ENCODE measurements at regions of chr2 and their contacts with region 1.

Region 1: DNA sequence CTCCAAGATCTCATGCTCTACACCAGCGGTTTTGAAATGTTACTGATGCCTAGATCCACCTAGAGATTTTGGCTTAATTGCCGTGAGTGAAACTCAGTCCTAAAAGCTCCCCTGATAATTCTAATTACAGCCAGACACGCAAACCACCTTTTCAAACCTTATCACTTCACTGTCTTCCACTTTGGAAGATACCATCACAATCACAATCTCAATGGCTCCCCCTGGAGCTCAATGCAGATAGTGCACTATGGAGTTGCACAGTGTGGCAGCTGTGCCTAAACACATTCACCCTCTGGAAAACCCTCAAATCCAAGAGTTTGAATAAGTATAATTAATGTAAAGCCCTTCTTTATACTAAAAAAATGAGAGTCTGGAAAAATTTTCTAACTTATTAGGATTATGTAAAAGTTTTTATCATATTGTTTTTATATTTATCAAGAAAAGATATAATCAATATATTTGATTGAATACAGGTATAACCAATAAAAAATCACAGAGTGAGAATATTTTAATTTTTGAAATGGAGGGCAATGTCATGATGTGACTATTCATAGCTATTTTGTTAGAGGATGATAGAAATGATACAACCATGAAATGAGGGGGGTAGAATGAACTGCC is 102.9 kb upstream of the SLC8A1 start:
- DNase-seq: peak; percentile 13 to 43
- ATAC-seq: peak; percentile 66 to 68
- H3K4me3 ChIP-seq: no peak overlapping the region
- H3K27ac ChIP-seq: no peak overlapping the region
- H3K4me1 ChIP-seq: no peaks in the 10 kb centered on the region
- H3K27me3 ChIP-seq: no peaks in the 10 kb centered on the region
- CTCF ChIP-seq: peak; percentile 72 to 84 (median 77)
- POLR2A ChIP-seq: no peak

Region 2: DNA sequence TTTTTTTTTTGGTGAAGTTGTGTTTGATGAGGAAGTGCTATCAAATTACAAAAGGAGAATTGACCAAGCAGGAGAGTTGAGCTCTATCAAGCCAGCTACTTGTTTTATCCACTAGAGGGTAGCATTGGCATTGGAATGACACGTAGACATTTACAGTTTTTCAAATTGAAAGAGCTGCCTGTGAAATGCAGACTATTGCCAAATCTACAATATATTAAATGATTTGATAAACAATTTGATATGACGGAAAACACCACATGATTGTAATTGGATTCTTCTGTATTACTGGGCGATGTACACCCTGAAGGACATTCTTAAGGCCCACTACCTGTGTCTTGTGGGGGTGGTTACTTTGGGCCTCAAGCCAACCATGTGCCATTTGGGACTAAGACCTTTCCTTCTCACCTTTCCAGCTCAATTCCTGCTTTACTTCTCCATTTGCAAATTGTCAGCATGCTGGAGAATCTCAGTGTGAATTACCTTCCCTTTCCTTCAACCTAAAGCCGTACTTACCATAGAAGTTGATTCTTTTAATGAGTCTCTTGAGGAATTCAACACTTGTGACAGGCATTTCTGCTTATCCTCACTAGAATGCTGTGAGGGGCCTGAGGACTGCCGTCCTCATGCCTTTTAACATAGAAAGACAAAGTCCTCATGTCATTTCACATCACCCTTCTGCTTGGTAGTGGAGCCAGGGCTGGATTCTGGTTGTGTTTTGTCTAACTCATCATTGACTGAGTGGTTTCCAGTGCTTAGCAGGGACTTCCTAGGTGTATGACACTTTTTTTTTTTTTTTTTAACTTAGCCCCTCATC is 640.9 kb before region 1 on chr2:
- in situ Hi-C with region 1: loop called in 3 of 4 experiments (anchors 5 to 25 kb)
- intact Hi-C with region 1: loop called (anchors 1 kb)
- DNase-seq: no peak
- ATAC-seq: peak; percentile 58 to 75
- H3K4me3 ChIP-seq: no peak overlapping the region
- H3K27ac ChIP-seq: no peak overlapping the region
- H3K4me1 ChIP-seq: no peaks in the 10 kb centered on the region
- H3K27me3 ChIP-seq: no peaks in the 10 kb centered on the region
- CTCF ChIP-seq: peak; percentile 39 to 77 (median 59)
- POLR2A ChIP-seq: no peak

Region 3: DNA sequence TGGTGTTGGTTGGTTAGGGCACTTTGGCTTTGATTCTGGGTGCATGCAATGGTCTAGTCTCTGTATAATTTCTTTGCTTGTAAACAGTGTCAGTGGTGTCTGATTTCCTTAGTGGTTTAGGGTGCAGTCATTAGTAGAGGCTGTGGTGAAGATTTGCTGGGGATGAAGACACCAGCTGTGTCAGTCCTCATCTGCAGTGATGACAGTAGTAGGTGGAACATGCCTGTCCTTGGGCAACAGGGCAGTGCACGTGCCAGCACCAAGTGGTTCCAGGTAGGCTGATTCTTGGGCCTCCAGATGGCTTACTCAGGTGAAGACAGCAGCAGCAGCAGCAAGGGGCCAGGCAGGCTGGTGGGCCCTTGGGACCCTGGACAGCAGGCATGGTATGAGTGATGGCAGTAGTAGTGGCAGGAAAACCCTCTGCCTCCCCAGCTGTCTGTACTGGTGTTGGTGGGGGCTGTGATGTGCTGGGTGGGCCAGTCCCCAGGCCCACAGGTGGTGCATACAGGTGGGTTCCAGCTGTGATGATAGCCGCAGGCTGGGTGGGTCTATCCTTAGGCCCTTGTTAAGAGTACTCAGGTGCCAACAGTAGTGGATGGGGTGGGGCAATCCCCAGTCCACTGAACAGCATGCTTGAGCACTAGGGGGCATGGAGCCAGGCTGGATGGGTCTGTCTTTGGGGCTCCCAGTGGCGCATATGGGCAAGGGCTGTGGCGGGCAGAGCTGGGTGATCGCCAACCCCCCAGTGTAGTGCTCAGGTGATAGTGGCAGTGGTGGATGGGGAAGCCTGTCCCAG is 635.1 kb before region 1 on chr2:
- in situ Hi-C with region 1: loop called in 3 of 4 experiments (anchors 10 to 25 kb)
- intact Hi-C with region 1: no loop called
- DNase-seq: no peak
- ATAC-seq: no peak
- H3K4me3 ChIP-seq: no peak overlapping the region
- H3K27ac ChIP-seq: no peak overlapping the region
- H3K4me1 ChIP-seq: no peaks in the 10 kb centered on the region
- H3K27me3 ChIP-seq: no peaks in the 10 kb centered on the region
- CTCF ChIP-seq: no peak
- POLR2A ChIP-seq: no peak

Region 4: DNA sequence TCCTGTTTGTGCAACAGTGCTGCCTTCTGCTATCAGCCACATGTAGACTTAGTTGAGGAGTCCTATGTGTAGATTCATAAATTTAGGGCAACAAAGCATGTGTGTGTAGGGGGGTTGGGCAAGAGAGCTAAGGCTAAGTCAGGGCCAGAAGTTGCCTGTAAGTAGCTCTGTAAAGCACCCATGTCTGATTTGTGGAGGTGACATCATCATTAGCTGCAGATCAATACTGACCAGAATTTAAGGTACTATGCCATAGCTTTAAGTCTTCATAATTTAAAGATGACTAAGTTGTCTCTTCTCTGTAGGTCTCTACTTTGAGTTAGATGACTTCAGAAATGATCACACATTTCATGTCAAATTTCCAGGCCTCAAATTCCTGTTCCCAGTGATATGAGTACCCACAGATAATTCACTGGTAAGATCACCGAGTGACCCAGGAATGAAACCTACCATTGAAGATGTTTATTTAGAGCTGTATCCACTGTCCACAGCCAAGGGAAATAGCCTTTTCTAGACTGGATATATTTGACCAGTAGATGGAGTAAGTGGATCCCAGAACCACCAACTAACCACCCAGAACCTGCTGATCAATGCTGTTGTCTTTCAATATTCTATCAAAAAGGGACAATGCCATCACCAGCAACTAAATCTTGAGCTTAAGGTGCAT is 341.8 kb before region 1 on chr2:
- in situ Hi-C with region 1: loop called in 2 of 4 experiments (anchors 5 to 25 kb)
- intact Hi-C with region 1: no loop called
- DNase-seq: no peak
- ATAC-seq: no peak
- H3K4me3 ChIP-seq: no peak overlapping the region
- H3K27ac ChIP-seq: no peak overlapping the region
- H3K4me1 ChIP-seq: no peaks in the 10 kb centered on the region
- H3K27me3 ChIP-seq: no peaks in the 10 kb centered on the region
- CTCF ChIP-seq: peak in 4 of 5 experiments; percentile 15 to 40 (median 28)
- POLR2A ChIP-seq: no peak

Region 5: GRCh38 chr2:40244675-40245074 is 310.1 kb before region 1 on chr2:
- in situ Hi-C with region 1: no loop called
- intact Hi-C with region 1: loop called (anchors 5 kb)
- DNase-seq: peak; percentile 10 to 22
- ATAC-seq: peak in 1 of 2 donors; percentile 63
- H3K4me3 ChIP-seq: no peak overlapping the region
- H3K27ac ChIP-seq: no peak overlapping the region
- H3K4me1 ChIP-seq: peaks cover 8% of the 10 kb centered on the region in 2 donors
- H3K27me3 ChIP-seq: no peaks in the 10 kb centered on the region
- CTCF ChIP-seq: peak in 1 of 5 experiments; percentile 38
- POLR2A ChIP-seq: no peak

Measured in gastrocnemius medialis (tissue), 4 donors.